Esophagus squamous epithelium (tissue), 5 donors: ENCODE measurements at regions of chr14 and their contacts with region 1.

Region 1: DNA sequence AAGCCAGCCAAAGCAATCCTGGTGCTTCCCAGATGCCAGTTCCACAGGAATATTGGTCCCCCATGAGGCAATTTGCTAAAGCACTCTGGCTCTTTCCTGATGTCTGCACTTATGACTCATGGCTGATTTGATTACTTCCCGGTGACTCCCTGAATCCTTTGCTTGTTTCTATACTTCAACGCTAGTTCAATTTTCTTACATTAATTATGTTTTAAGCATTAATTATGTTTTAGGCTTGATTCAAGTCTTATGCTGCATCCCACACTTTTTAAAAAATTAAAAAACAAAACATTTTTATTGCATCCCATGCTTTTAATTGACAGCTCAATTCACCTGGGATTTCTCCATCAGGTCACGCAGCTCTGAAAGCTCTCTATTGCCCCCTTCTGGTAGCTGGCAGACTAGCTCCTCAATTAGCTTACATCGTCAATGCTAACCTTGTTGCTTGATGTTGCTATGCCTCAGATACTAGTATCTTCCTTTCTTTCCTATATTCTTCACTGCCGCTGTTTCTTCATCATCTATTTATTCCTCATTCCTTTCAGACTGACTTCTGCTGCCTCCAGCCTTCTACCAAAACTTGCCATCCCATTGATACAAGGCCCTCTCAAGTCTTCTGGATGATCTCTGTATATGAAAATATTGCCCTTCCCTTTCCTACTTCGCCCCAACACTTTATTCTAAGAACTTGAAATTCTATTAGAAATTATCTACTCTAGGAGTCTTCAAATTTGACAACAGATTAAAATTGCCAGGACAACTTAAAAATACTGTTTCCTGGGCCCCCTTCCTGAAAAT is 32.0 kb downstream of the TSHR start:
- DNase-seq: no peak
- H3K4me3 ChIP-seq: no peak overlapping the region
- H3K27ac ChIP-seq: no peak overlapping the region
- H3K4me1 ChIP-seq: peaks cover 0 to 5% (median 0%) of the 10 kb centered on the region in 3 donors
- H3K27me3 ChIP-seq: peaks cover 0 to 33% (median 0%) of the 10 kb centered on the region in 4 donors
- CTCF ChIP-seq: peak; percentile 76 to 91 (median 90)
- POLR2A ChIP-seq: no peak

Region 2: DNA sequence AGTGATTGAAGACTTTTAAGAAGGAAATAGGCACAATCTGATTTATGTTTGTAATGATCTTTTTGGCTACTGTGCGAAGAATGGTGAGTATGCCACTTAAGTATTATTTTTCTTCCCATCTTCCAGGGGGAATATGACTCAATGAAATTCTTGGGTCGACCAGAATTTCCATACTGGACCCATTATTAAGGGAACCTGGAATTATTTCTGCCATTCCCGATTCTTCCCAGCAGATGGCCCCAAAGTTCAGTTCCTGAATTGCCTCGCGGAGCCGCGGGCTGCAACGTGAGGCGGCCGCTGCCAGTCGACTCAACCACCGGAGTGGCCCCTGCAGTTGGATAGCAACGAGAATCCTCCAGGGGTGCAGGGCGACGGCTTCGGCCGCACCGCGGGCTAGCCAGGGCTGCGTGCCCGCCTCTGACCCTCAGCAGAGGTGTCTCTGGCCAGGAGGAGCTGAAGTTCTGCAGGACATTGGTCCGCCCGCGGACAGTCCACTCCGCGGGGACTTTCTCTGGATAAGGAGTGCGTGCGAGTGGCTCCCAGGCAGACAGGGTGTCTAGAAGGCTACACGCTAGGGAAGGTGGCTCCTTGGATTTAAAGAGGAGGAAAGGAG is 32.6 kb before region 1 on chr14:
- intact Hi-C with region 1: loop called (anchors 2 kb)
- DNase-seq: no peak
- H3K4me3 ChIP-seq: peak overlapping the region; percentile 27 to 76 (median 52)
- H3K27ac ChIP-seq: no peak overlapping the region
- H3K4me1 ChIP-seq: peaks cover 7 to 20% (median 8%) of the 10 kb centered on the region in 3 donors
- H3K27me3 ChIP-seq: peaks cover 0 to 37% (median 3%) of the 10 kb centered on the region in 4 donors
- CTCF ChIP-seq: peak; percentile 43 to 87 (median 82)
- POLR2A ChIP-seq: no peak